ENCODE measurements at regions of chr22 and their contacts with region 1.

Region 1: DNA sequence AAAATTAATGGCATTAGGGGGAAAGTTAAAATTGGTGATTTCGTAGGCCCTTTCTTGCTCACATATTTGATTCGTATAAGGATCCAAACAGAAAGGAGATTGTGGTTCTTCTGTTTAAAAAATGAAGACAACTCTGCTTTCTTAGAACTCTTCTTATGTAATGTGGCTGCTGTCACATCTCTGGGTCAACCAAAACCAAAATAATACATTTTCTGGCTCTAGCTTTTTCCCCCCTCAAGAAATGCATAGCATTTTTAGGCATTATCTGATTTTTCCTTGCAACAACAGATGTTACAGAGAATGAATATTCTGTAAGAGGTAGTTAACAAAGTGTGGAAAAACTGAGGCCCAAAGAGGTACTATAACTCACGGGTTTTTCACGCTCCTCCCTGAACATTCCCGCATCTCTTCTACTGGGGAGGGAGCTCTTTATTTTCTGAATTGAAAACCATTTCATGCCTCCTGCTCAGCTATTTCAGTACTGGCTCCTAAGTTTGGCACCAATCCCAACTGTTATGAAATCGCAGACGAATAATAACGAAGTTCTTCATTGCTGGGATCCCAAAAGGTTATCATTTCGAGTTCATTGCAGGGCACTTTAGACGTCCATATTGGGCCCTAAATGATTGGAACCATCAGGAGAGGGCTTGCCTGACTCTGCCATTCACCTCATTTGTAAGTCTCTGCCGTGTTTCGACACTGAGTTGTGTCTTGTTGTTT is 17.1 kb downstream of the GRAP2 start:
- DNase-seq: peak in 2 of 14 experiments; percentile 17 to 41
- ATAC-seq: no peak
- H3K4me3 ChIP-seq: peak overlapping the region; percentile 20
- H3K4me3 Mint-ChIP-seq: peak overlapping the region; percentile 52
- H3K27ac ChIP-seq: peak overlapping the region; percentile 61 to 73
- H3K27ac Mint-ChIP-seq: no peak overlapping the region
- H3K4me1 ChIP-seq: peaks cover 80% of the 10 kb centered on the region
- H3K4me1 Mint-ChIP-seq: peaks cover 92% of the 10 kb centered on the region
- H3K27me3 ChIP-seq: no peaks in the 10 kb centered on the region
- H3K27me3 Mint-ChIP-seq: no peaks in the 10 kb centered on the region
- CTCF ChIP-seq: no peak

Region 2: GRCh38 chr22:39900306-39901227 is 17.4 kb before region 1 on chr22 and contains the start of gene GRAP2:
- CTCF ChIA-PET with region 1: interaction called, 12 read pairs
- POLR2A ChIA-PET with region 1: interaction called, 393 read pairs
- intact Hi-C with region 1: no loop called
- DNase-seq: peak; percentile 54 to 94 (median 66)
- ATAC-seq: peak; percentile 96
- H3K4me3 ChIP-seq: peak within 1 kb of the TSS; percentile 70
- H3K4me3 Mint-ChIP-seq: peak within 1 kb of the TSS; percentile 89
- H3K27ac ChIP-seq: peak within 1 kb of the TSS; percentile 53 to 66
- H3K27ac Mint-ChIP-seq: no peak within 1 kb of the TSS
- H3K4me1 ChIP-seq: peaks cover 28% of the 10 kb centered on the region
- H3K4me1 Mint-ChIP-seq: peaks cover 23% of the 10 kb centered on the region
- H3K27me3 ChIP-seq: no peaks in the 10 kb centered on the region
- H3K27me3 Mint-ChIP-seq: no peaks in the 10 kb centered on the region
- CTCF ChIP-seq: no peak
- total RNA-seq, gene GRAP2: 65.3 to 75.6 TPM

Region 3: GRCh38 chr22:39932918-39933649 is 15.1 kb after region 1 on chr22:
- CTCF ChIA-PET with region 1: interaction called, 21 read pairs
- POLR2A ChIA-PET with region 1: interaction called, 393 read pairs
- intact Hi-C with region 1: loop called (anchors 1 to 2 kb)
- DNase-seq: peak in 9 of 14 experiments; percentile 38 to 82 (median 57)
- ATAC-seq: peak; percentile 37
- H3K4me3 ChIP-seq: peak overlapping the region; percentile 9
- H3K4me3 Mint-ChIP-seq: peak overlapping the region; percentile 65
- H3K27ac ChIP-seq: peak overlapping the region in 1 of 2 donors; percentile 87
- H3K27ac Mint-ChIP-seq: no peak overlapping the region
- H3K4me1 ChIP-seq: peaks cover 93% of the 10 kb centered on the region
- H3K4me1 Mint-ChIP-seq: peaks cover 55% of the 10 kb centered on the region
- H3K27me3 ChIP-seq: no peaks in the 10 kb centered on the region
- H3K27me3 Mint-ChIP-seq: no peaks in the 10 kb centered on the region
- CTCF ChIP-seq: peak; percentile 66

Measured in CD4-positive, alpha-beta T cell (primary cell).